ENCODE measurements at regions of chr5 and their contacts with region 1.

Region 1: GRCh38 chr5:54905943-54906537 is 79.4 kb downstream of the ESM1 start:
- DNase-seq: peak; percentile 39 to 78 (median 62)
- ATAC-seq: no peak
- H3K4me3 ChIP-seq: no peak overlapping the region
- H3K4me3 Mint-ChIP-seq: no peak overlapping the region
- H3K27ac ChIP-seq: no peak overlapping the region
- H3K27ac Mint-ChIP-seq: no peak overlapping the region
- H3K4me1 ChIP-seq: no peaks in the 10 kb centered on the region
- H3K4me1 Mint-ChIP-seq: peaks cover 9% of the 10 kb centered on the region
- H3K27me3 ChIP-seq: no peaks in the 10 kb centered on the region
- H3K27me3 Mint-ChIP-seq: peaks cover 10% of the 10 kb centered on the region
- CTCF ChIP-seq: peak; percentile 84

Region 2: GRCh38 chr5:54825005-54825404 is 81.0 kb before region 1 on chr5:
- CTCF ChIA-PET with region 1: no interaction called
- POLR2A ChIA-PET with region 1: no interaction called
- intact Hi-C with region 1: no loop called
- DNase-seq: no peak
- ATAC-seq: no peak
- H3K4me3 ChIP-seq: no peak overlapping the region
- H3K4me3 Mint-ChIP-seq: no peak overlapping the region
- H3K27ac ChIP-seq: no peak overlapping the region
- H3K27ac Mint-ChIP-seq: no peak overlapping the region
- H3K4me1 ChIP-seq: no peaks in the 10 kb centered on the region
- H3K4me1 Mint-ChIP-seq: no peaks in the 10 kb centered on the region
- H3K27me3 ChIP-seq: no peaks in the 10 kb centered on the region
- H3K27me3 Mint-ChIP-seq: no peaks in the 10 kb centered on the region
- CTCF ChIP-seq: no peak

Region 3: GRCh38 chr5:54944364-54944763 is 38.3 kb after region 1 on chr5:
- CTCF ChIA-PET with region 1: interaction called, 5 read pairs
- POLR2A ChIA-PET with region 1: interaction called, 3 read pairs
- intact Hi-C with region 1: loop called (anchors 1 to 2 kb)
- DNase-seq: peak in 11 of 14 experiments; percentile 11 to 77 (median 29)
- ATAC-seq: peak; percentile 58
- H3K4me3 ChIP-seq: no peak overlapping the region
- H3K4me3 Mint-ChIP-seq: no peak overlapping the region
- H3K27ac ChIP-seq: no peak overlapping the region
- H3K27ac Mint-ChIP-seq: no peak overlapping the region
- H3K4me1 ChIP-seq: peaks cover 3% of the 10 kb centered on the region
- H3K4me1 Mint-ChIP-seq: no peaks in the 10 kb centered on the region
- H3K27me3 ChIP-seq: no peaks in the 10 kb centered on the region
- H3K27me3 Mint-ChIP-seq: no peaks in the 10 kb centered on the region
- CTCF ChIP-seq: peak; percentile 89

Region 4: GRCh38 chr5:55146543-55147151 is 240.6 kb after region 1 on chr5:
- CTCF ChIA-PET with region 1: interaction called, 10 read pairs
- POLR2A ChIA-PET with region 1: no interaction called
- intact Hi-C with region 1: loop called (anchors 1 kb)
- DNase-seq: peak; percentile 68 to 90 (median 76)
- ATAC-seq: peak; percentile 95
- H3K4me3 ChIP-seq: no peak overlapping the region
- H3K4me3 Mint-ChIP-seq: no peak overlapping the region
- H3K27ac ChIP-seq: no peak overlapping the region
- H3K27ac Mint-ChIP-seq: no peak overlapping the region
- H3K4me1 ChIP-seq: peaks cover 15% of the 10 kb centered on the region
- H3K4me1 Mint-ChIP-seq: peaks cover 14% of the 10 kb centered on the region
- H3K27me3 ChIP-seq: no peaks in the 10 kb centered on the region
- H3K27me3 Mint-ChIP-seq: peaks cover 10% of the 10 kb centered on the region
- CTCF ChIP-seq: peak; percentile 99

Region 5: GRCh38 chr5:55159763-55160492 is 253.9 kb after region 1 on chr5 and contains the start of gene GPX8:
- CTCF ChIA-PET with region 1: interaction called, 11 read pairs
- POLR2A ChIA-PET with region 1: interaction called, 11 read pairs
- intact Hi-C with region 1: loop called (anchors 1 kb)
- DNase-seq: peak in 5 of 14 experiments; percentile 7 to 75 (median 67)
- ATAC-seq: peak; percentile 68
- H3K4me3 ChIP-seq: no peak within 1 kb of the TSS
- H3K4me3 Mint-ChIP-seq: no peak within 1 kb of the TSS
- H3K27ac ChIP-seq: no peak within 1 kb of the TSS
- H3K27ac Mint-ChIP-seq: no peak within 1 kb of the TSS
- H3K4me1 ChIP-seq: no peaks in the 10 kb centered on the region
- H3K4me1 Mint-ChIP-seq: no peaks in the 10 kb centered on the region
- H3K27me3 ChIP-seq: peaks cover 4 to 18% of the 10 kb centered on the region in 2 experiments
- H3K27me3 Mint-ChIP-seq: peaks cover 50% of the 10 kb centered on the region
- CTCF ChIP-seq: peak; percentile 74
- total RNA-seq, gene GPX8: not detected